Posterior cingulate gyrus (tissue), 11 donors: ENCODE measurements at regions of chr3 and their contacts with region 1.

Region 1: GRCh38 chr3:88203642-88204055 is 53.9 kb downstream of the C3orf38 start:
- DNase-seq: peak; percentile 60 to 97 (median 85)

Region 2: GRCh38 chr3:89113903-89114840 is 910.5 kb after region 1 on chr3:
- intact Hi-C with region 1: loop called (anchors 5 kb)
- DNase-seq: peak; percentile 58 to 96 (median 80)

Region 3: DNA sequence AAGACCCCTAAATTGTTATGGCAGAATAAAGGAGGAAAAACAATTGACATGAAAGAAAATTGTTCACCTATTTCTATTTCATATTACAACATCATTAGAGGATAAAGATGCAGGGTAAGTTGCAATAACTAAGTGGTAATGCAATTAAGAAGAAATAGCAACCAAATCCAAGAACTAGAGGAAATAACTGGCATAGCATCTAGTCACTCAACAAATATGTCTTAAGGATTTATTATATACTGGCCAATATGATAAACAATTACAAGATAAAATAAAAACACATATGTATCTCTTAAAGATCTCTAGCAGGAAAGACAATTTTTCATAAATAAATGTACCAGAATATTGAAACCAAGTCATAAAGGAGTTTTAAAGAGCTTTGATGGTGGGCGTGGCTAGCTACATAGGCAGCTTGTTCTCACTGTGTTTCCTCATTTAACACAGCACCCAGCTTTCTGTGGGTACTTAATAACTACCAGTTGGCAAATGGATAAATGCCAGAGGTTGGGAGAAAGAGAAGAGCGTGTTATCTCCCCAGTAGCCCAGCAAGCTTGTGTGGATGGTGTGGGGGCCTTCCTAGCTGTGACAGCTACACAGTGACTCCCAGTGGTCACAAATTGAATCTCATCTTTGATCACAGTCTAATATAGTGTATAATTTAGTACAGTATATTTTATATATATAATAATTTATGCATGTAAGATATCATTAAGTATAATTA is 1887.7 kb after region 1 on chr3:
- intact Hi-C with region 1: loop called (anchors 5 kb)
- DNase-seq: peak in 6 of 10 donors; percentile 11 to 89 (median 27)

Region 4: GRCh38 chr3:90184861-90185260 is 1981.2 kb after region 1 on chr3:
- intact Hi-C with region 1: loop called (anchors 5 kb)
- DNase-seq: peak in 1 of 10 donors; percentile 4